Activated naive CD4-positive, alpha-beta T cell treated with anti-CD3 and anti-CD28 coated beads, Interleukin-2, amount 10 ng/mL, durations not matched to agents 7 days and 5 days (primary cell): ENCODE measurements at regions of chr13 and their contacts with region 1.

Region 1: GRCh38 chr13:31909864-31910551 is 121.6 kb upstream of the FRY start:
- DNase-seq: peak; percentile 66
- H3K4me3 Mint-ChIP-seq: no peak overlapping the region
- H3K27ac Mint-ChIP-seq: no peak overlapping the region
- H3K4me1 Mint-ChIP-seq: peaks cover 24% of the 10 kb centered on the region
- H3K27me3 Mint-ChIP-seq: peaks cover 34% of the 10 kb centered on the region

Region 2: GRCh38 chr13:31930901-31931522 is 21.0 kb after region 1 on chr13:
- CTCF ChIA-PET with region 1: interaction called, 14 read pairs
- DNase-seq: peak; percentile 33
- H3K4me3 Mint-ChIP-seq: no peak overlapping the region
- H3K27ac Mint-ChIP-seq: no peak overlapping the region
- H3K4me1 Mint-ChIP-seq: peaks cover 22% of the 10 kb centered on the region
- H3K27me3 Mint-ChIP-seq: peaks cover 9% of the 10 kb centered on the region

Region 3: GRCh38 chr13:32022311-32022710 is 112.3 kb after region 1 on chr13:
- CTCF ChIA-PET with region 1: interaction called, 11 read pairs
- DNase-seq: no peak
- H3K4me3 Mint-ChIP-seq: no peak overlapping the region
- H3K27ac Mint-ChIP-seq: no peak overlapping the region
- H3K4me1 Mint-ChIP-seq: no peaks in the 10 kb centered on the region
- H3K27me3 Mint-ChIP-seq: no peaks in the 10 kb centered on the region

Region 4: DNA sequence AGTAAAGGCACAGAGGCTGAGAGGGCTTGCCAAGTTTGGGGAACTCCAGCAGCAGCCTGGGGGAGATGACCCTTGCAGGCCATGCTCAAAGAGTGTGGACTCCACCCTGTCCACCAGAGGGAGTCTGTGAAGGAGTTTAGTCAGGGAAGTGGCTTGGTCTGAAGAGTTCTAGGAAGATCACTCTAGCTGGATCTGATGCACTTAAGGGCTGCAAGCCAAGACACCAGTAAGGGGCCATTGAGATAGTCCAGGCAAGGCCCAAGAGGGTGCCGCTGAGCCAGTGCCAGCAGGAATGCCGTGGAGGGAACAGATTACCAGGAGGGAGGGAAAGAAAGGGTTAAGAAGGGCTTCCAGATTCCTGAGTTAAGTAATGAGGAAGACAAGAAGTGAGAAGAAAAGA is 336.5 kb after region 1 on chr13:
- CTCF ChIA-PET with region 1: interaction called, 18 read pairs
- DNase-seq: peak; percentile 57
- H3K4me3 Mint-ChIP-seq: no peak overlapping the region
- H3K27ac Mint-ChIP-seq: no peak overlapping the region
- H3K4me1 Mint-ChIP-seq: no peaks in the 10 kb centered on the region
- H3K27me3 Mint-ChIP-seq: no peaks in the 10 kb centered on the region